Calu3 (cell line): ENCODE measurements at regions of chr1 and their contacts with region 1.

Region 1: GRCh38 chr1:212665241-212666115 is 34.2 kb downstream of the BATF3 start:
- DNase-seq: peak; percentile 91
- H3K4me3 Mint-ChIP-seq: peak overlapping the region; percentile 70
- H3K27ac Mint-ChIP-seq: peak overlapping the region; percentile 10
- H3K4me1 Mint-ChIP-seq: no peaks in the 10 kb centered on the region
- H3K27me3 Mint-ChIP-seq: peaks cover 24% of the 10 kb centered on the region
- CTCF ChIP-seq: peak; percentile 97

Region 2: GRCh38 chr1:212132025-212132424 is 533.5 kb before region 1 on chr1:
- CTCF ChIA-PET with region 1: no interaction called
- intact Hi-C with region 1: no loop called
- DNase-seq: no peak
- H3K4me3 Mint-ChIP-seq: no peak overlapping the region
- H3K27ac Mint-ChIP-seq: no peak overlapping the region
- H3K4me1 Mint-ChIP-seq: no peaks in the 10 kb centered on the region
- H3K27me3 Mint-ChIP-seq: no peaks in the 10 kb centered on the region
- CTCF ChIP-seq: no peak

Region 3: DNA sequence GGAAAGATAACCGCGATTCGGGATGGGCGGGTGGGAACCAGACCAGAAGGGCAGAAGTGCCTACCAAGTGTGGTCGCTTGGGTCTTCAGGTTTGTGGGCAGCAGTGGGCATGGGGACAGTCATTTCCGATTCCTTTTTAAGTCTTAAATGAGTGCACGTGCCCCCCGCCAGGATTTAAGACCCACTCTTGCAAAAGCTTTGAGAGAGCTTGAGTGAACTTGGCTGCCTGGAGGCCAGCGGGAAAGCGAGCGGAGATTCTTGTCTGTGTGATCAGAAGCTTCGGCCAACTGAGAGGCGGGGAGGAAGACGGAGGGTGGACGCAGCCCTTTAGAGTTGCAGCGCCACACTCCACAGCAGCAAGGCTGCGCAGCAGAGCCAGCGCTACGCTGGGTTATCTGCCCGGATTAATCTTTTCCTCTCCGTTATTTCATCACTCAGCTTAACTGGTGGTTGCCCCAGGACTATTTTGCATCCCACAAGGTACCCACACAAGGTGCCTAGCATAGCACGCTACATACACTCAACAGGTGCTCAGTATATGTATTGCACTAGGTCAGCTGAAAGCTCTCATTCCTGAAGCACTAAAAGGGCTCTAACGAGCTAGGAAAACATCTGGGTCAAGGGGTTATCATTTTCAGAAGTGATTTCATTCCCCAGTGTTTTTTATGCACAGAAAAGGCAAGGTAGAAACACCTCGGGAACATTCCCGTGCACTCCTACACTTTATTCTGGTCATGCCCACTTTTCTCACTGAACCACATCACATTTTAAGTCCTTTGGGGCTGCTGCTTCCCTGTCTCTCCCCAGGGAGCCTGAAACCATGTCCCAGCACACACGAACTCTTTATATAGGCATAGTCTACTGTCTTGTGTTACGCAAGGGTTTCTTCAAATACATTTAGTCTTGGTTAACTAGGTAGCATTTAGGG is 35.7 kb after region 1 on chr1:
- CTCF ChIA-PET with region 1: interaction called, 7 read pairs
- intact Hi-C with region 1: loop called (anchors 5 kb)
- DNase-seq: peak; percentile 35
- H3K4me3 Mint-ChIP-seq: peak overlapping the region; percentile 64
- H3K27ac Mint-ChIP-seq: no peak overlapping the region
- H3K4me1 Mint-ChIP-seq: peaks cover 16% of the 10 kb centered on the region
- H3K27me3 Mint-ChIP-seq: peaks cover 72% of the 10 kb centered on the region
- CTCF ChIP-seq: no peak

Region 4: DNA sequence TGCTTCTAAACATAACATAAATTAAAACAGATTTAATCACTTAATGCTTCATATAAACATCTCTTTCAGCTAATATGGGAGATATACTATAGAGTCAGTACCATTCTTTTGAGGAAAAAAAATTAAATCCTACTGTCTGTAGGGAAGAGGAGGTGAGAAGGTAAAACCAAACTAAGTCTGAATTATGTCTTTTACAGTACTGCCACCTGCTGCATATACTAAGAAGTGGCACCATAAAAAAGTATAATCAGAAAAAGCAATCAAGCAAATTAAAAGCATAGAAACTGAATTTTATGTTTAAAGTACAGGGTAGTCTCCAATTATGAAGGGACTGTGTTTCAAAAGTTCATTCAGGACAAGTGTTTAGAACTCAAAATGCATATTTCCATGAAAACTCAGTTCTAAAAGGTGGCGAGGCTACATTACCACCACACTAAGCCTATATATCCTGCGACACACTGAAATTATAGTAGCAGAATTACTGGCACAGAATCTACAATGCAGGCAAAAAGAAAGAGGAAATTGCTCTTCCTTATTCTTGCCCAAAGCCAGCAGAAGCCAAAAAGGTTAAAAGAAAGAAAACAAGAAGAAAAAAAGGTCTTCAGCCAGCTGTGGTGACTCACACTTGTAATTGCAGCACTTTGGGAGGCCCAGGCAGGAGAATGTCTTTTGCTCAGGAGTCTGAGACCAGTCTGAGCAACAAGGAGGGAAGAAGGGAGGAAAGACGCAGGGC is 117.1 kb after region 1 on chr1:
- CTCF ChIA-PET with region 1: interaction called, 9 read pairs
- intact Hi-C with region 1: loop called (anchors 1 kb)
- DNase-seq: no peak
- H3K4me3 Mint-ChIP-seq: no peak overlapping the region
- H3K27ac Mint-ChIP-seq: peak overlapping the region; percentile 9
- H3K4me1 Mint-ChIP-seq: peaks cover 7% of the 10 kb centered on the region
- H3K27me3 Mint-ChIP-seq: no peaks in the 10 kb centered on the region
- CTCF ChIP-seq: peak; percentile 57

Region 5: DNA sequence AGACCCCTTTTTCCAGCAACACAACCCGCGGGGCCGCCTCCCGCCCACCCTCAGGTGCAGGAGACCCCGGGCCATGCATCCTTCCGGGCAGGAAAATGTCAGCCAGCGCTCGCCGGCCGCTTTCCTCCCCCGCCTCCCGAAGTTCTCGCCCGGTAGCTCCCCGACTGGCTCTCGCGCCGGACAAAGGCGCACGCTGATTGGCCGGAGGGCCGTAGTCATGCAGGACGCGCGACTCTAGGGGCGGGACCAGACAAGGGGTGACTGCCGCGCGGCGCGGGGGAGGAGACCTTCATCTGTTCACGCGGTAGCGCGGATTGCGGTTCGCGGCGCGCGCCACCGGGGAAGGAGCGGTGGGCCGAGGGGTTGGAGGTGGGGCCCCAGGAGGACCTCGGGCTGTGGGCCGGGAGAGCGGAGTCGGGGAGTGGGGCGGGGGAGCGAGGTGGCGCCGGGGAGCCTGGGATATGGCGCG is 192.5 kb after region 1 on chr1 and contains the start of gene FLVCR1:
- CTCF ChIA-PET with region 1: no interaction called
- intact Hi-C with region 1: no loop called
- DNase-seq: peak; percentile 99
- H3K4me3 Mint-ChIP-seq: no peak within 1 kb of the TSS
- H3K27ac Mint-ChIP-seq: peak within 1 kb of the TSS; percentile 82
- H3K4me1 Mint-ChIP-seq: peaks cover 25% of the 10 kb centered on the region
- H3K27me3 Mint-ChIP-seq: no peaks in the 10 kb centered on the region
- CTCF ChIP-seq: no peak
- total RNA-seq, gene FLVCR1: 26.0 and 27.2 TPM in 2 replicates

Region 6: DNA sequence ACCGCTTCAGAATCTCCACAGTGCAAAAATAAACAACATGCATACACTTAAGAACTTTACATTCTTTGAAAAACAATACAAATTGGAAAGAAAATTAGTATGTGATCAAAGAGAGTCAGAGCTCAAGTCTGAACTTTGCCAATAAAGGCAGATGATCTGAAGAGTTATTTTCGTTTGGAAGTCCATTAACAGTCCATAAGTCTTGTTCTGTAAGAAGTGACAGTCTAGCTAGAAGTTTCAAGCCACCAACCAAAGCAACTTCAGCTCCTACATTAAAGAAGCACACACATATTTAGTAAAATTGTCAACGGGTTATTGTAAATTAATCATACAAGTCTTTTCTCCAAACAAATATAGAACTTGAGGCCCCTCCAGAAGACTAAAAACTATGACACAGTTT is 329.4 kb after region 1 on chr1:
- CTCF ChIA-PET with region 1: interaction called, 5 read pairs
- intact Hi-C with region 1: loop called (anchors 5 kb)
- DNase-seq: no peak
- H3K4me3 Mint-ChIP-seq: no peak overlapping the region
- H3K27ac Mint-ChIP-seq: no peak overlapping the region
- H3K4me1 Mint-ChIP-seq: no peaks in the 10 kb centered on the region
- H3K27me3 Mint-ChIP-seq: no peaks in the 10 kb centered on the region
- CTCF ChIP-seq: no peak